Aorta (tissue), 5 donors: ENCODE measurements at regions of chr11 and their contacts with region 1.

Region 1: GRCh38 chr11:125592305-125593112 is at the start of gene STT3A:
- DNase-seq: peak; percentile 99 to 100
- ATAC-seq: peak; percentile 100
- H3K4me3 ChIP-seq: peak within 1 kb of the TSS; percentile 75 to 84
- H3K27ac ChIP-seq: peak within 1 kb of the TSS; percentile 94 to 99
- H3K4me1 ChIP-seq: peaks cover 0 to 1% of the 10 kb centered on the region in 2 donors
- H3K27me3 ChIP-seq: no peaks in the 10 kb centered on the region
- total RNA-seq, gene STT3A: 105 to 112 TPM

Region 2: GRCh38 chr11:125111343-125112207 is 480.9 kb before region 1 on chr11 and contains the start of gene TMEM218:
- intact Hi-C with region 1: loop called in 1 of 2 experiments (anchors 5 kb)
- DNase-seq: peak; percentile 100
- ATAC-seq: peak; percentile 100
- H3K4me3 ChIP-seq: peak within 1 kb of the TSS; percentile 67 to 78
- H3K27ac ChIP-seq: peak within 1 kb of the TSS in 1 of 2 donors; percentile 53
- H3K4me1 ChIP-seq: peaks cover 0 to 3% of the 10 kb centered on the region in 2 donors
- H3K27me3 ChIP-seq: no peaks in the 10 kb centered on the region
- total RNA-seq, gene TMEM218: 9.9 to 16.9 TPM

Region 3: GRCh38 chr11:125451400-125452124 is 140.9 kb before region 1 on chr11:
- intact Hi-C with region 1: loop called in 1 of 2 experiments (anchors 10 kb)
- DNase-seq: peak; percentile 84
- ATAC-seq: peak; percentile 72
- H3K4me3 ChIP-seq: no peak overlapping the region
- H3K27ac ChIP-seq: peak overlapping the region in 1 of 2 donors; percentile 4
- H3K4me1 ChIP-seq: no peaks in the 10 kb centered on the region
- H3K27me3 ChIP-seq: no peaks in the 10 kb centered on the region

Region 4: DNA sequence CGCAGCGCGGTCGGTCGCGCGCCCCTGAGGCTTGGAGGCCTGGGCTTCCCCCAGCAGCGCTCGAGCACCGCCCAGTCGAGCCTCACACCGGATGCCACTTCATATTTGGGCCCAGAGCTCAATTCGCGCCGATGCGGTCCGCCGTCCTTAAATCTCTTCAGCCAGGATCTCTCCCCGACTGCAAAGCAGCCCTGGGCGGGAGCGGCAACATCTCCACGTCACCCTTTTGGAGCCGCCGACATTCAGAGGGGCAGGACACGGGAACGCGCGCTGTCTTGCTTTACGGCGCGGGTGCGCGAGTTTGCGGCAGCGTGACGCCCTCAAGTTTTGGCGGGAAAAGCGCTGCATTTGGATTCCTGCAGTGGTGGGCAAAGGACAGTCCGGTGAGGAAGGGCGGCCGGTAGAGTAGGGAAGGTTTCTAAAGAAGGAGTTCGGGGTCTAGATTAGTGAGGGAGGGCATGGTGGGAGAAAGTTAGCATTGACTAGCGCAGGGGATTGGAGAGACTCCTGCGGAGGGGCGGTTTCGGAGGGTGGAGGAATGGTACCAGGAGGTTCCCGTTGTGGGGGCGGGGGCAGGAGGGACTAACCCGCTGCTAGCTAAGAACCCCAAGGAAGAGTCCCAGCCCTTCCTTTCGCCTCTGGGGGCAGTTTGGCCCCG is 33.2 kb after region 1 on chr11:
- intact Hi-C with region 1: loop called in 1 of 2 experiments (anchors 5 kb)
- DNase-seq: peak; percentile 93 to 95
- ATAC-seq: peak; percentile 96
- H3K4me3 ChIP-seq: peak overlapping the region; percentile 45 to 62
- H3K27ac ChIP-seq: peak overlapping the region; percentile 20 to 57
- H3K4me1 ChIP-seq: peaks cover 5 to 6% of the 10 kb centered on the region in 2 donors
- H3K27me3 ChIP-seq: no peaks in the 10 kb centered on the region

Region 5: DNA sequence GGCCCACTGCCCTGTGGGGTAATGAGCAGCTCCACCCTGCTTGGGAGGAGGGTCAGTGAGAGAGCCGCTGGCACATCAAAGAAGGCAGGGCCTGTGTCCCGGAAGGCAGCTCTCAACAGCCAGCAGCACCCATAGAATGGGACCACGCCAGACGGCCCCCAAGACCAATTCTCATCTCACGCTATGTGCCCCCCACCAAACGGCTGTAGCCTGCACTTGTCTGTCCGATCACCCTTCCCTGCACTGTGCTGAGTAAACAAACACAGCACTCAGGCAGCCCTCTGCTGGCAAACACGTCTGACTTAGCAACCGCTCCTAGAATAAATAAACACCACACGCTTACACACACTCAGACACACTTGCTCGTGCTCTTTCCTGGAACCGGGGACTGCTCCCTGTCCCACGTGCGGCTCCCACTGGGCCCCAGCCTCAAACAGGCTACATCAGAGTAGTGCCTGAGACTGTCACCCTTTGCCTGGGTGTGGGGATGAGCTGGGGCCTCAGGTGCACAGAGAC is 523.4 kb after region 1 on chr11:
- intact Hi-C with region 1: loop called in 1 of 2 experiments (anchors 10 kb)
- DNase-seq: peak; percentile 74 to 89
- ATAC-seq: peak; percentile 89
- H3K4me3 ChIP-seq: no peak overlapping the region
- H3K27ac ChIP-seq: peak overlapping the region; percentile 31 to 87
- H3K4me1 ChIP-seq: peaks cover 2 to 17% of the 10 kb centered on the region in 2 donors
- H3K27me3 ChIP-seq: no peaks in the 10 kb centered on the region

Region 6: GRCh38 chr11:126211235-126212088 is 619.0 kb after region 1 on chr11 and contains the starts of genes FAM118B and RPUSD4:
- intact Hi-C with region 1: loop called in 1 of 2 experiments (anchors 10 kb)
- DNase-seq: peak; percentile 99 to 100
- ATAC-seq: peak; percentile 100
- H3K4me3 ChIP-seq: peak within 1 kb of the TSS; percentile 73 to 75
- H3K27ac ChIP-seq: no peak within 1 kb of the TSS
- H3K4me1 ChIP-seq: peaks cover 0 to 6% of the 10 kb centered on the region in 2 donors
- H3K27me3 ChIP-seq: no peaks in the 10 kb centered on the region
- total RNA-seq, gene FAM118B: 14.1 to 21.9 TPM
- total RNA-seq, gene RPUSD4: 18.1 to 24.0 TPM